PC-9 (cell line): ENCODE measurements at regions of chr5 and their contacts with region 1.

Region 1: GRCh38 chr5:80368661-80369480 is 39.0 kb upstream of the ZFYVE16 start:
- DNase-seq: no peak
- H3K4me3 ChIP-seq: no peak overlapping the region
- H3K27ac ChIP-seq: no peak overlapping the region
- H3K4me1 ChIP-seq: no peaks in the 10 kb centered on the region
- H3K27me3 ChIP-seq: no peaks in the 10 kb centered on the region
- CTCF ChIP-seq: no peak

Region 2: DNA sequence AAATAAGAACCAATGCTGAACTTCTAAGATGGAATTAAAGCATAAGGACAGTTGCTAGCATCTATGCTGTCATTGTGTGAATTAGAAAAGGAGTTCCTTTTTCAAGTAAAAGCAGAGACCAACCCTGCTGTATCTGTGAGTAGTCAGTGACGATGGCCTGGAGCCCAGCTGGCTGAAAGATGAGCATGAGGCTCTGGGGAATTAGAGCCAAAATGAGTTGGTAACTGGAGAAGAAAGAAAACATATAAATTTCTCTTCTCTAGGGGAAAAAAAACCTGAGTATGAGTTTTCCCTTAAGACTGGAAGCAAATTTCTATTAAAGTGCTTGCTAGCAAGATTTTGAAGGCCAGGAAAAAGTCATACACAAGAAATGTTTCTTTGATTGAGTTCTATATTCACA is 50.7 kb before region 1 on chr5:
- CTCF ChIA-PET with region 1: no interaction called
- POLR2A ChIA-PET with region 1: no interaction called
- intact Hi-C with region 1: no loop called
- DNase-seq: no peak
- H3K4me3 ChIP-seq: no peak overlapping the region
- H3K27ac ChIP-seq: no peak overlapping the region
- H3K4me1 ChIP-seq: no peaks in the 10 kb centered on the region
- H3K27me3 ChIP-seq: no peaks in the 10 kb centered on the region
- CTCF ChIP-seq: no peak

Region 3: GRCh38 chr5:80346055-80346454 is 22.8 kb before region 1 on chr5:
- CTCF ChIA-PET with region 1: no interaction called
- POLR2A ChIA-PET with region 1: interaction called, 12 read pairs
- intact Hi-C with region 1: no loop called
- DNase-seq: peak; percentile 18 to 47
- H3K4me3 ChIP-seq: no peak overlapping the region
- H3K27ac ChIP-seq: no peak overlapping the region
- H3K4me1 ChIP-seq: no peaks in the 10 kb centered on the region
- H3K27me3 ChIP-seq: no peaks in the 10 kb centered on the region
- CTCF ChIP-seq: peak; percentile 72